ENCODE measurements at regions of chr12 and their contacts with region 1.

Region 1: GRCh38 chr12:14454098-14454907 is 88.8 kb downstream of the ATF7IP start:
- DNase-seq: peak; percentile 32
- H3K4me3 Mint-ChIP-seq: no peak overlapping the region
- H3K27ac Mint-ChIP-seq: peak overlapping the region; percentile 67
- H3K4me1 Mint-ChIP-seq: peaks cover 46% of the 10 kb centered on the region
- H3K27me3 Mint-ChIP-seq: no peaks in the 10 kb centered on the region

Region 2: DNA sequence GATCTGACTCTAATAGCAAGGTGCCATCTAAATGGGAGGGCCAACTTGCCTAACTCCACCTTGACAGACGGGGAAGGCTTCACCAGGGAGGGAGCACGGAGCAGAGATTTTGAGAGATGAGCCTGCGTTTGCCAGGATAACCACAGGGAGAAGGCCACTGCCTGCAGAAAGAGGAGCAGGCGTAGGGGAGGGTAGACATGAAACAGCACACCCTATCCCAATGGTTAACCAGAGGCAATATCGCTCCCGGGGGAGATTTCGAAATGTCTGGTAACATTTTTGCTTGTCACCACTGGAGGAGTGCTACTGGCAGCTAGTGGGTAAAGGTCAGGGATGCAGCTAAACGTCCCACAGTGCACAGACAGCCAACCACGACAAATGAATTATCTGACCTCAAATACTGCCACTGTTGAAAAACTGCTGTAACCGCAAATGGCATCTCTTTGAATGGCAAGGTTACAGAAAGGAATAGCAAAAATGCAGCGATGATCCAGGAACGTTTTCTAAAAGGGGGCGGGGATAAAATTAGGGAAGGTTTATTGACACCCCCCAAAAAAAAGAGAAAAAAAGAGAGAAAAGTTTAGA is 214.9 kb before region 1 on chr12:
- CTCF ChIA-PET with region 1: interaction called, 31 read pairs
- POLR2A ChIA-PET with region 1: no interaction called
- DNase-seq: peak; percentile 41
- H3K4me3 Mint-ChIP-seq: peak overlapping the region; percentile 64
- H3K27ac Mint-ChIP-seq: peak overlapping the region; percentile 89
- H3K4me1 Mint-ChIP-seq: peaks cover 23% of the 10 kb centered on the region
- H3K27me3 Mint-ChIP-seq: no peaks in the 10 kb centered on the region

Region 3: DNA sequence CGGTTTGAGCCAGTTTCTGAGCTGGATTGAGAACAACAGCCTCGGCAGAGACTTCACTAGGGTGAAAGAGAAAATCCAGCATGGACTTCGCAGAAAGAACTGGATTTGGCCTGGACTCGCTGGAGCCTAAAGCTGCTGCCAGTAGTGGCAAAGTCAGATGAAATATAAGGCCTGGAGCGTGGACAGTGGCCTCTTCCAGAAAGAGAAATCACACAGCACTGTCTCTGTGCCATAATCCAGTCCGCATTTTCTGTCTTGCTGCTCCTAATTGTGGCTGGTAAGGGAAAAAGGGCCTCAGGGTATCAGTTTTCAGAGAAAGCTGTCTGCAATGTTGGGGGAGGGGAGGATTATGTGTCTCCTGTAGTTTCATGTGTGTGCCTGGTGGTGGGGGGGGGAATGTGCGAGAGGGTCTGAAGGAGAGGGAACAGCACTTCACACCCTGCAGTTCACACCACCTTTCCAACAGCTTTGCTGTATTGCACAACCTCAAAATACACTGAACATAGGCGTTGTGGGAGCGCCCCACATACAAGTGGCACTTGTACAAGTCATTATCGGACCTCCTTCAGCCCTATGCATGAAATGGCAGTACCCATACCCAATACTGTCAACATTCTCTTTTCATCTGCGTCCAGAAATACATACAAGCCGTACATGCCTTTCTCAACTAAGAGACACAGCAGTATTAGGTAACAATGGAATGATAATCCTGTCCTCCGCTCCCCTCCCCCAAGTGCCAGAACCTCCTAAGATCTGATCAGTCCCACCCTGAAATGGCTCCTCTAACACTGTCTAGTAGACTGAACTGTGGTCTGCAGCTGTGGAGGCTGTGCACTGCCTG is 196.3 kb before region 1 on chr12:
- CTCF ChIA-PET with region 1: interaction called, 15 read pairs
- POLR2A ChIA-PET with region 1: no interaction called
- DNase-seq: peak; percentile 85
- H3K4me3 Mint-ChIP-seq: peak overlapping the region; percentile 55
- H3K27ac Mint-ChIP-seq: peak overlapping the region; percentile 98
- H3K4me1 Mint-ChIP-seq: peaks cover 58% of the 10 kb centered on the region
- H3K27me3 Mint-ChIP-seq: no peaks in the 10 kb centered on the region

Region 4: GRCh38 chr12:14365294-14366208 is 88.8 kb before region 1 on chr12 and contains the start of gene ATF7IP:
- CTCF ChIA-PET with region 1: interaction called, 16 read pairs
- POLR2A ChIA-PET with region 1: no interaction called
- DNase-seq: peak; percentile 98
- H3K4me3 Mint-ChIP-seq: peak within 1 kb of the TSS; percentile 90
- H3K27ac Mint-ChIP-seq: peak within 1 kb of the TSS; percentile 99
- H3K4me1 Mint-ChIP-seq: peaks cover 28% of the 10 kb centered on the region
- H3K27me3 Mint-ChIP-seq: no peaks in the 10 kb centered on the region
- total RNA-seq, gene ATF7IP: 96.7 to 108 TPM

Region 5: GRCh38 chr12:14394317-14395073 is 59.8 kb before region 1 on chr12:
- CTCF ChIA-PET with region 1: interaction called, 12 read pairs
- POLR2A ChIA-PET with region 1: no interaction called
- DNase-seq: peak; percentile 61
- H3K4me3 Mint-ChIP-seq: peak overlapping the region; percentile 80
- H3K27ac Mint-ChIP-seq: peak overlapping the region; percentile 95
- H3K4me1 Mint-ChIP-seq: peaks cover 87% of the 10 kb centered on the region
- H3K27me3 Mint-ChIP-seq: no peaks in the 10 kb centered on the region

Region 6: GRCh38 chr12:14410841-14411569 is 43.3 kb before region 1 on chr12:
- CTCF ChIA-PET with region 1: no interaction called
- POLR2A ChIA-PET with region 1: no interaction called
- DNase-seq: no peak
- H3K4me3 Mint-ChIP-seq: no peak overlapping the region
- H3K27ac Mint-ChIP-seq: peak overlapping the region; percentile 32
- H3K4me1 Mint-ChIP-seq: peaks cover 53% of the 10 kb centered on the region
- H3K27me3 Mint-ChIP-seq: no peaks in the 10 kb centered on the region

Region 7: GRCh38 chr12:14431975-14432374 is 22.3 kb before region 1 on chr12:
- CTCF ChIA-PET with region 1: interaction called, 10 read pairs
- POLR2A ChIA-PET with region 1: no interaction called
- DNase-seq: no peak
- H3K4me3 Mint-ChIP-seq: no peak overlapping the region
- H3K27ac Mint-ChIP-seq: no peak overlapping the region
- H3K4me1 Mint-ChIP-seq: peaks cover 25% of the 10 kb centered on the region
- H3K27me3 Mint-ChIP-seq: no peaks in the 10 kb centered on the region

Region 8: GRCh38 chr12:14473707-14474287 is 19.5 kb after region 1 on chr12:
- CTCF ChIA-PET with region 1: interaction called, 10 read pairs
- POLR2A ChIA-PET with region 1: no interaction called
- DNase-seq: no peak
- H3K4me3 Mint-ChIP-seq: no peak overlapping the region
- H3K27ac Mint-ChIP-seq: no peak overlapping the region
- H3K4me1 Mint-ChIP-seq: peaks cover 2% of the 10 kb centered on the region
- H3K27me3 Mint-ChIP-seq: no peaks in the 10 kb centered on the region